ENCODE measurements at regions of chr12 and their contacts with region 1.

Region 1: GRCh38 chr12:121668750-121669520 is 519 bp downstream of the MORN3 start:
- DNase-seq: peak; percentile 36
- H3K4me3 Mint-ChIP-seq: no peak overlapping the region
- H3K27ac Mint-ChIP-seq: no peak overlapping the region
- H3K4me1 Mint-ChIP-seq: peaks cover 10% of the 10 kb centered on the region
- H3K27me3 Mint-ChIP-seq: no peaks in the 10 kb centered on the region
- CTCF ChIP-seq: peak; percentile 39

Region 2: DNA sequence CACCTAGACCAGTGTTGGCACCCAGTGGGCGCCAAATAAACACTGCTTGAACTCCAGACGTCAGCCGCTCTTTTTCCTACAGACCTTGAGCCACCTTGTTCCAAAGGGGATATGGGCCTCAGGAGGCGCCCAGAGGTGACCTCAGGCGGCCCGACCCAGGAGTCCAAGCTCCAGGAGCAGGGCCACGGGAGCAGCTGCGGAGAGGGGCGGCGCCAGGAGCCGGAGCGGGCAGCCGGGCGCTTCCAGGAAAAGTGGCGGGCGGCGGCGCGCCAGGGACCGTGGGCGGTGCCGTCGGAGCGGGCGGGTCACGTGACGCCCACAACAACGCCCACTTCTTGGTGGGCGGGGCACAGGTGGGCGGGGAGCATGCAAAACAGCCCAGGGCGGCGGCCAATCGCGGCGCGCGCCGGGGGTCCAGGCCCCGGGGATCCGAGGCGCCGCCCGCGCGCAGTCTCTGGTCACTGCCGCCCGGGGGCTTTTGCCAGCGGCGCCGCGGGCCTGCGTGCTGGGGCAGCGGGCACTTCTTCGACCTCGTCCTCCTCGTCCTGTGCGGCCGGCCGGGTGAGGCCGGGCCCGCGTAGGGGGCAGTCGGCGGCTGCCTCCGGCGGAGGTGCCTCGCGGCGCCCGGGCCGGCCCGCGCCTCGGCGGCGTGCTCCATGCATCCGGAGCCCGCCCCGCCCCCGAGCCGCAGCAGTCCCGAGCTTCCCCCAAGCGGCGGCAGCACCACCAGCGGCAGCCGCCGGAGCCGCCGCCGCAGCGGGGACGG is 42.7 kb before region 1 on chr12 and contains the start of gene ORAI1:
- CTCF ChIA-PET with region 1: interaction called, 3 read pairs
- POLR2A ChIA-PET with region 1: interaction called, 5 read pairs
- intact Hi-C with region 1: loop called (anchors 2 kb)
- DNase-seq: peak; percentile 93
- H3K4me3 Mint-ChIP-seq: peak within 1 kb of the TSS; percentile 76
- H3K27ac Mint-ChIP-seq: no peak within 1 kb of the TSS
- H3K4me1 Mint-ChIP-seq: peaks cover 4% of the 10 kb centered on the region
- H3K27me3 Mint-ChIP-seq: no peaks in the 10 kb centered on the region
- CTCF ChIP-seq: no peak
- total RNA-seq, gene ORAI1: 12.1 and 16.3 TPM in 2 replicates

Region 3: GRCh38 chr12:121657305-121658008 is 11.5 kb before region 1 on chr12:
- CTCF ChIA-PET with region 1: interaction called, 10 read pairs
- POLR2A ChIA-PET with region 1: no interaction called
- intact Hi-C with region 1: no loop called
- DNase-seq: no peak
- H3K4me3 Mint-ChIP-seq: no peak overlapping the region
- H3K27ac Mint-ChIP-seq: no peak overlapping the region
- H3K4me1 Mint-ChIP-seq: no peaks in the 10 kb centered on the region
- H3K27me3 Mint-ChIP-seq: no peaks in the 10 kb centered on the region
- CTCF ChIP-seq: no peak

Measured in MCF 10A (cell line).